CD8-positive, alpha-beta T cell (primary cell): ENCODE measurements at regions of chr19 and their contacts with region 1.

Region 1: DNA sequence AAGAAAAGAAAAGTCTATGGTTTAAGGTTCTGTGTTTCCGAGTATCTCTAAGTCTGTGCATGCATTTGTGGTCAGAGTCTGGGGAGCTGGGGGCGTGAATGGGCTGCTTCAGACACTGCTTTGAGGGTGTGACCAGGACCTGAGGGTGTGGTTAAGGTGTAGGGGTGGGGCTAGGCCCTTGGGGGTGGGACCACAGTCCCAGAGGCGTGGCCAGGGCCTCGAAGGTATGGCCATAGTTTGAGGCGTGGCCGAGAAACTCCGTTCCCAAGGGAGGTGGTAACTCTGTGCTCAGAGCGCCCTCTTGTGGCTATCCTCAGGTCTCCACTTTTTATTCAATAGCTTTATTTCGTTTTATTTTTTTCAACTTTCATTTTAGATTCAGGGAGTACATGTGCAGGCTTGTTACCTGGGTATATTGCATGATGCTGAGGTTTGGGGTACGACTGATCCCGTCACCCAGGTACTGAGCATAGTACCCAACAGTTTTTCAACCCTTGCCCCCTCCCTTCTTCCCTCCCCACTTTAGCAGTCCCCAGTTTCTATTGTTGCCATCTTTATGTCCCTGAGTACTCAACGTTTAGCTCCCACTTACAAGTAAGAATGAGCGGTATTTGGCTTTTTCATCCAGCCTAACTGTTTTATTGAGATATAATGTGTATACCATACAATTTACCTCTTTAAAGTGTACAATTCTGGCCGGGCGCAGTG is 7.0 kb upstream of the CBLC start:
- DNase-seq: peak; percentile 96 to 99 (median 98)
- ATAC-seq: peak; percentile 100
- H3K4me3 ChIP-seq: peak overlapping the region in 1 of 2 experiments; percentile 3
- H3K4me3 Mint-ChIP-seq: peak overlapping the region; percentile 52
- H3K27ac ChIP-seq: peak overlapping the region in 1 of 2 experiments; percentile 36
- H3K27ac Mint-ChIP-seq: peak overlapping the region; percentile 75
- H3K4me1 ChIP-seq: peaks cover 22% of the 10 kb centered on the region
- H3K4me1 Mint-ChIP-seq: peaks cover 25% of the 10 kb centered on the region
- H3K27me3 ChIP-seq: no peaks in the 10 kb centered on the region
- H3K27me3 Mint-ChIP-seq: no peaks in the 10 kb centered on the region
- CTCF ChIP-seq: peak; percentile 67

Region 2: DNA sequence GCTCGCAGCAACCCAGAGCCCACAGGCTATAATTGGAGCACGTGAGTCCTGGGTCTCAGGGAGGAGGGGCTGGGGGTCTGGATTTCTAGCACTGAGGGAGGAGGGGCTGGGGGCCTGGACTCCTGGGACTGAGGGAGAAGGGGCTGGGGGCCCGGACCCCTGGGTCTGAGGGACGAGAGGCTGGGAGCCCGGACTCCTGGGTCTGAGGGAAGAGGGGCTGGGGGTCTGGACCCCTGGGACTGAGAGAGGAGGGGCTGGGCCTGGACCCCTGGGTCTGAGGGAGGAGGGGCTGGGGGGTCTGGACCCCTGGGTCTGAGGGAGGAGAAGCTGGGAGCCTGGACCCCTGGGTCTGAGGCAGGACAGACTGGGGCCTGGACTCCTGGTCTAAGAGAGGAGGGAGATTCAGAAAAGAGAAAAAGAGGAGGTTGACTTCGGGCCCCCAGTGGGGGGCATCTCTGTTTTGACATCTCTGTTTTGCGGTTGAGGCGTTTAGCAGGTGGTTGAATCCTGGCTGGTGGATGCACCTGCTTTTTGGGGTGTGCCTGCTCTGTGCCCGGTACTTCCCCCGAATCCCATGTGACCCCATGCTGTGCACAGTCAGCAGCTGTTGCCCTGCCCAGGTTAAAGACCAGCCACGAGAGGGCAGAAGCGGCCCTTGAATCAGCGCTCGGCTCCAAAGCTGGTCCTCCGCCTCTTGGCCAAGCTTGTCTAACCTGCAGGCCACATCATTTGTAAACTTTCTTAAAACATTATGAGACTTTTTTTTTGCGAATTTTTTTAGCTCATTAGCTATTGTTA is 116.5 kb before region 1 on chr19:
- CTCF ChIA-PET with region 1: interaction called, 8 read pairs
- POLR2A ChIA-PET with region 1: no interaction called
- intact Hi-C with region 1: loop called in 1 of 2 experiments (anchors 1 kb)
- DNase-seq: peak; percentile 42 to 85 (median 72)
- ATAC-seq: peak; percentile 95
- H3K4me3 ChIP-seq: no peak overlapping the region
- H3K4me3 Mint-ChIP-seq: no peak overlapping the region
- H3K27ac ChIP-seq: no peak overlapping the region
- H3K27ac Mint-ChIP-seq: no peak overlapping the region
- H3K4me1 ChIP-seq: peaks cover 11% of the 10 kb centered on the region
- H3K4me1 Mint-ChIP-seq: peaks cover 9% of the 10 kb centered on the region
- H3K27me3 ChIP-seq: no peaks in the 10 kb centered on the region
- H3K27me3 Mint-ChIP-seq: peaks cover 3% of the 10 kb centered on the region
- CTCF ChIP-seq: peak; percentile 19

Region 3: GRCh38 chr19:44707794-44708193 is 62.9 kb before region 1 on chr19:
- CTCF ChIA-PET with region 1: interaction called, 638 read pairs
- POLR2A ChIA-PET with region 1: interaction called, 3 read pairs
- intact Hi-C with region 1: no loop called
- DNase-seq: no peak
- ATAC-seq: no peak
- H3K4me3 ChIP-seq: no peak overlapping the region
- H3K4me3 Mint-ChIP-seq: no peak overlapping the region
- H3K27ac ChIP-seq: no peak overlapping the region
- H3K27ac Mint-ChIP-seq: no peak overlapping the region
- H3K4me1 ChIP-seq: no peaks in the 10 kb centered on the region
- H3K4me1 Mint-ChIP-seq: peaks cover 6% of the 10 kb centered on the region
- H3K27me3 ChIP-seq: no peaks in the 10 kb centered on the region
- H3K27me3 Mint-ChIP-seq: no peaks in the 10 kb centered on the region
- CTCF ChIP-seq: no peak

Region 4: GRCh38 chr19:44732615-44733014 is 38.1 kb before region 1 on chr19:
- CTCF ChIA-PET with region 1: interaction called, 638 read pairs
- POLR2A ChIA-PET with region 1: no interaction called
- intact Hi-C with region 1: no loop called
- DNase-seq: no peak
- ATAC-seq: no peak
- H3K4me3 ChIP-seq: no peak overlapping the region
- H3K4me3 Mint-ChIP-seq: no peak overlapping the region
- H3K27ac ChIP-seq: no peak overlapping the region
- H3K27ac Mint-ChIP-seq: no peak overlapping the region
- H3K4me1 ChIP-seq: no peaks in the 10 kb centered on the region
- H3K4me1 Mint-ChIP-seq: peaks cover 2% of the 10 kb centered on the region
- H3K27me3 ChIP-seq: no peaks in the 10 kb centered on the region
- H3K27me3 Mint-ChIP-seq: no peaks in the 10 kb centered on the region
- CTCF ChIP-seq: no peak

Region 5: GRCh38 chr19:44752816-44753618 is 17.7 kb before region 1 on chr19:
- CTCF ChIA-PET with region 1: interaction called, 15 read pairs
- POLR2A ChIA-PET with region 1: interaction called, 12 read pairs
- intact Hi-C with region 1: loop called (anchors 1 kb)
- DNase-seq: peak; percentile 88 to 99 (median 93)
- ATAC-seq: peak; percentile 76
- H3K4me3 ChIP-seq: peak overlapping the region; percentile 13 to 68
- H3K4me3 Mint-ChIP-seq: peak overlapping the region; percentile 95
- H3K27ac ChIP-seq: peak overlapping the region; percentile 83 to 95
- H3K27ac Mint-ChIP-seq: peak overlapping the region; percentile 97
- H3K4me1 ChIP-seq: peaks cover 64% of the 10 kb centered on the region
- H3K4me1 Mint-ChIP-seq: peaks cover 65% of the 10 kb centered on the region
- H3K27me3 ChIP-seq: no peaks in the 10 kb centered on the region
- H3K27me3 Mint-ChIP-seq: no peaks in the 10 kb centered on the region
- CTCF ChIP-seq: no peak

Region 6: DNA sequence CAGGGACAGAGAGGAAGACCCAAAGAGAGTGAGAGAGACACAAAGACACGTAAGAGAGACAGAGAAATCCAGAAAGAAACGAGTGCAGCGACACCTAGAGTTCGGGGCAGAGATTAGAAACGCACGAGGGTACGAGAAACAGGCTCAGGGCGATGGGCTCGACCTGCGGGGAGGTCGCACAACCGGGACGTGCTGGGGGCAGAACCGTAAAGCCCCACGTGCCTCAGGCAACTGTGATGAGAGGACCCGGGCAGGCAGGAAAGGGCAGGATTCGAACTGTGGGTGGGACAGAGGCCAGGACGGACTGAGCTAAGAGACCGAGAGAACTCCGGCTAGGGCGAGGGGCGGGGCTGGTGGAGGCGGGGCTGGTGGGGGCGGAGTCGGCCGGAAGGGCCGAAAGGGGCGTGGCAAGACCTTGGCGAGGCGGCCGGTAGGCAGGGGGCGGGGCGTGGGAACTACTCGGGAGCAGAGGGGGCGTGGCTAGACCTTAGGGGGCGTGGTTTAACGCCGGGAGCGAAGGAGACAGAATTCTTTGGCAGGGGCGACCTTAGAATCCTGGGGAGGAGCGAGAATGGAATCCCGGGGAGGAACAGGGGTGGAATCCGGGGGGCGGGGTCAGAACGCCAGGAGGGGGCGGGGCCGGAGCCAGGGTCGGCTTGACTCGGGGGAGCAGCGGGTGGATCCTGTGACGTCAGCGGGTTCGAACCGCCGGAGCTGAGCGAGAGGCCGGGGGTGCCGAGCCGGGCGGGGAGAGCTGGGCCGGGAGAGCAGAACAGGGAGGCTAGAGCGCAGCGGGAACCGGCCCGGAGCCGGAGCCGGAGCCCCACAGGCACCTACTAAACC is 75.1 kb after region 1 on chr19 and contains the start of gene NECTIN2:
- CTCF ChIA-PET with region 1: interaction called, 3 read pairs
- POLR2A ChIA-PET with region 1: no interaction called
- intact Hi-C with region 1: loop called (anchors 1 to 2 kb)
- DNase-seq: peak; percentile 47 to 85 (median 71)
- ATAC-seq: peak; percentile 68
- H3K4me3 ChIP-seq: peak within 1 kb of the TSS; percentile 39 to 46
- H3K4me3 Mint-ChIP-seq: peak within 1 kb of the TSS; percentile 96
- H3K27ac ChIP-seq: no peak within 1 kb of the TSS
- H3K27ac Mint-ChIP-seq: peak within 1 kb of the TSS; percentile 55
- H3K4me1 ChIP-seq: peaks cover 45% of the 10 kb centered on the region
- H3K4me1 Mint-ChIP-seq: peaks cover 26% of the 10 kb centered on the region
- H3K27me3 ChIP-seq: peaks cover 0 to 18% of the 10 kb centered on the region in 2 experiments
- H3K27me3 Mint-ChIP-seq: peaks cover 19% of the 10 kb centered on the region
- CTCF ChIP-seq: peak; percentile 36
- total RNA-seq, gene NECTIN2: 2.0 to 2.5 TPM